Right ventricle myocardium superior (tissue), 1 donor: ENCODE measurements at regions of chr12 and their contacts with region 1.

Region 1: DNA sequence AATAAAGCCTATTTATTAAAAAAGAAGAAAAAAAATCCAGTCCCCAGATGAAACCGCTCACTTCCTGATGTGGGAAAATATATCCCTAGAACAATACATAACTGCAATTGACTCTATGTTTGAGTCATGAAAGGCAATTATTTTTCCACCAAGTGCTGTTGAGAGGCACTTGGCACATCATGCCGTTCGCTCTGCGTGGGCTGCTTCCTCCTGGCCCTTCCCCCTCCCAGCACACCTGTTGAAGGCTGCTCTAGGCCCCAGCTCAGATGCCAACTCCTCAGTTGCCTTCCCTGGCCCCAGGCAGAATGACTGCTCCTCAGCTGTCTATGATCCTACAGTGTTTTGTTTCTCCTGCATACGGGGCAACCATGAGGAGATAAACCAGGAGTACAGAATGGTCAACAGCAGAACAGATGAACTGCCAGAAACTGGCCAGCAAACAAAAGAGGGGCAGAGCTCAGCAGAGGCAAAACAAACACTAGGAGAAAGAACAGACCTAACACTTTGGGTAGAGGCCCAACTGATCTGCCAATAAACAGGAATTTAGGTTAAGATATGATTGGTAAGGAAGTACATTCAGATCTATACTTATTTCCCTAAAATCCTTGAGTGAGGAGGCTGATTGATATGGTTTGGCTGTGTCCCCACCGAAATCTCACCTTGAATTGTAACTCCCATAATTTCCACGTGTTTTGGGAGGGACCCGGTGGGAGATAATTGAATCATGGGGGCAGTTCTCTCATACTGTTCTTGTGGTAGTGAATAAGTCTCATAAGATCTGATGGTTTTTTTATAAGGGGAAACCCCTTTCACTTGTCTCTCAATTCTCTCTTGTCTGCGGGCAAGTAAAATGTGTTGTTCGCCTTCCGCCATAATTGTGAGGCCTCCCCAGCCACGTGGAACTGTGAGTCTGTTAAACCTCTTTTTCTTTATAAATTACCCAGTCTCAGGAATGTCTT is 58.6 kb downstream of the SLC38A1 start:
- DNase-seq: peak; percentile 64
- ATAC-seq: peak; percentile 81

Region 2: GRCh38 chr12:46124848-46125619 is 85.2 kb before region 1 on chr12:
- intact Hi-C with region 1: no loop called
- DNase-seq: peak; percentile 38
- ATAC-seq: peak; percentile 94

Region 3: DNA sequence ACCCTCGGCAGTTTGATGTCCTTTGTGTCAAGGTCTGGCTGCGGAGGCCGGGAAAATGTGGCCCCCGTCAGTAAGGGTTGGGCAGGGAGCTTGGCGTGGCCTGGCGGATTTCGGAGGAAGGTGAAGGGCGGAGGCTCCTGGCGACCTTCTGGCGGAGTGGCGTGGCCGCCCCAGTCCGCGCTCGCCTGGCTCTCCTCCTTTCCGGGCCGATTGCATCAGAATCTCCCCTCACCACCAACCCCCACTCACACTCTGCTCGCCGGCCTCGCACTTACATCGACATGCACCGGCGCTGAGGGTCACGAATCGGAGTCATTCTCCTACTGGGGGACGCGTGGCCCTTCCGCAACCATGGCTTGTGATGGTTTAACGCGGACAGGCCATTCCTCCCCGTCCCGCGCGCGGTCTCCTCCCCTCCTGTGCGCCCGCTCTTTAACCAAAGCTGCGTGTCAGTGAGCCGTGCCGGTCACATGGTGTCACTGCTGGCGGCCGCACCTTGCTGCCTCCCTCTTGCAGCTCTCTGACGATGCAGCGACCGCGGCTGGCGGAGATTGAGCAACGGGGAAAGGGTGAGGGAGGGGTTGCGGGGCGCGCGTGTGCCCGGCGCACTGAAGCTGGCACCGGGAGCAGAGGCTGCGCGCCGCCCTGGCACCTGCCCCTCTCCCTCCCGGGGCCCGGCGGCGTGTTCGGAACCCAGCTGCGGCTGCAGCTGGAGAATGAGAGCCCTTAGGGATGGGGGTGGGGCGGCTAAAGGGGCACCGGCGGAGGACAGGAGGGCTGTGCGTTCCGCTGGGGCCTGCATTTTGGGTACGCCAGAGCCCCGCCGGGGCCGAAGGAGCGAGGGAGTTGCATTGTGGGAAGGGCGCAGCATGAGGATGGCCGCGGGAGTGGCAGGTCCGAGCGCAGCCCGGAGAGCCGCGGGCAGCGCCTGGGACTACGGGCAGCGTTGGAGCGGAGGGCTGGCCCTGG is 58.7 kb after region 1 on chr12 and contains the start of gene SLC38A1:
- intact Hi-C with region 1: loop called (anchors 10 kb)
- DNase-seq: peak; percentile 92
- ATAC-seq: peak; percentile 89
- total RNA-seq, gene SLC38A1: 136 TPM